Endothelial cell of umbilical vein (primary cell): ENCODE measurements at regions of chr22 and their contacts with region 1.

Region 1: GRCh38 chr22:17562906-17563870 is at the start of gene SLC25A18:
- DNase-seq: no peak
- H3K4me3 ChIP-seq: no peak within 1 kb of the TSS
- H3K27ac ChIP-seq: no peak within 1 kb of the TSS
- H3K4me1 ChIP-seq: no peaks in the 10 kb centered on the region
- H3K27me3 ChIP-seq: peaks cover 3 to 6% of the 10 kb centered on the region in 2 experiments
- CTCF ChIP-seq: no peak
- POLR2A ChIP-seq: no peak
- total RNA-seq, gene SLC25A18: not detected in 2 replicates

Region 2: DNA sequence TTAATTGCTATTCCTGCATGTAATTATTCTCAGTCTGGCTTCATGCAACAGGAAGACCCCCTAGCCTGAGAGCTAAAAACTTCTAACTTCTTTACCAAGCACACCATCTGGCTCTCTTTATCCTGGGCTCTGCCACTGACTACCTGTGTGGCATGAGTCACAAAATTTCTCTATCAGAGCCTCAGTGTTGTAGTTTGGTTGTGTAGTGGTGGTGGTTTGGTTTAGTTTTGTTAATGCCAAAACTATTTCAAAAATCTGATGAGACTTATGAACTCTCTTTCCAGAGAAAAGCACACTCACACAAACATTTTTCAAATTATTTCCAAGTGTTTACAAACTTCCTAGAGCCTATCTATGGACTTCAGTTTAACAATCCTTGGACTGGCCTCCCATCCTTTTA is 485.9 kb before region 1 on chr22:
- CTCF ChIA-PET with region 1: interaction called, 12 read pairs
- POLR2A ChIA-PET with region 1: no interaction called
- dilution Hi-C with region 1: no loop called
- intact Hi-C with region 1: no loop called
- DNase-seq: no peak
- H3K4me3 ChIP-seq: no peak overlapping the region
- H3K27ac ChIP-seq: no peak overlapping the region
- H3K4me1 ChIP-seq: peaks cover 3% of the 10 kb centered on the region
- H3K27me3 ChIP-seq: no peaks in the 10 kb centered on the region
- CTCF ChIP-seq: no peak
- POLR2A ChIP-seq: no peak

Region 3: DNA sequence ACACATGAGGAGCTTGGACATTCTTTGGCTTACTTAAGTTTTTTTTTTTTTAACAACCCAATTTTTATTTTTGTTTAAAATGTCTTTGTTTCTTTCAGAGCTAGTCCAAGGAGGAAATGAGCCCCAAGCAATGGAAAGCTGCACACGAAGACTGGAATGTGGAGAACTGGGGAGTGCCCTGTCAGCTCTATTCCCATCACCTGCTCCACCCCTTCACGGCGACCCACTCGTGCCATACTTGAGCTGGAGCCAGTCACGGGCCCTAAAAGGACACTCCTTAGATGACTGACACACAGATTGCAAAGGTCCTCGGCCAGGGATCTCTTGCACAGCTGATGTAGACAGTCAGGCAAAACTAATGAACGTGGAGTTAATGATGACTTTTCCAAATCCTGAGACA is 10.5 kb before region 1 on chr22:
- CTCF ChIA-PET with region 1: interaction called, 13 read pairs
- POLR2A ChIA-PET with region 1: no interaction called
- dilution Hi-C with region 1: no loop called
- intact Hi-C with region 1: no loop called
- DNase-seq: no peak
- H3K4me3 ChIP-seq: no peak overlapping the region
- H3K27ac ChIP-seq: no peak overlapping the region
- H3K4me1 ChIP-seq: no peaks in the 10 kb centered on the region
- H3K27me3 ChIP-seq: peaks cover 3 to 4% of the 10 kb centered on the region in 2 experiments
- CTCF ChIP-seq: no peak
- POLR2A ChIP-seq: no peak

Region 4: GRCh38 chr22:17578136-17578754 is 15.1 kb after region 1 on chr22:
- CTCF ChIA-PET with region 1: interaction called, 10 read pairs
- POLR2A ChIA-PET with region 1: no interaction called
- dilution Hi-C with region 1: no loop called
- intact Hi-C with region 1: no loop called
- DNase-seq: peak; percentile 23
- H3K4me3 ChIP-seq: no peak overlapping the region
- H3K27ac ChIP-seq: no peak overlapping the region
- H3K4me1 ChIP-seq: no peaks in the 10 kb centered on the region
- H3K27me3 ChIP-seq: no peaks in the 10 kb centered on the region
- CTCF ChIP-seq: no peak
- POLR2A ChIP-seq: no peak

Region 5: DNA sequence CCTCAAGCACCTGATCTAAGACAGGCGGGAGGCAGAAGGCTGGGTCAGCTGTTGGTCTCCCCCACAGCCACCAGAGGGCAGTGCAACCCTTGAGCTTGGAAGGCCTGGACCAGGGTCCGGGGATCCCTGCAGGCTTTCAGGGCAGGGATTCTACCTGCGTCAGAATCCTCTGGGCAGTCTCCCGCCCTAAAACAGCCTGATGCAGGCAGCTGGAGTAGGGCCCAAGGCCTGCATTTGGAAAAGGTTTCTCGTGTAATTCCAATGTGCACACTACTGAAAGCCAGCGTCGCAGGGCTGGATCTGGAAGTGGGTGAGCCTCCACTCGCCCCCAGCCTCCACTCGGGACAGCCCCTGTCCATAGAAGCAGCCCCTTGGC is 179.3 kb after region 1 on chr22:
- CTCF ChIA-PET with region 1: interaction called, 22 read pairs
- POLR2A ChIA-PET with region 1: no interaction called
- dilution Hi-C with region 1: no loop called
- intact Hi-C with region 1: no loop called
- DNase-seq: peak; percentile 49
- H3K4me3 ChIP-seq: no peak overlapping the region
- H3K27ac ChIP-seq: no peak overlapping the region
- H3K4me1 ChIP-seq: no peaks in the 10 kb centered on the region
- H3K27me3 ChIP-seq: no peaks in the 10 kb centered on the region
- CTCF ChIP-seq: peak; percentile 66 to 88
- POLR2A ChIP-seq: no peak

Region 6: DNA sequence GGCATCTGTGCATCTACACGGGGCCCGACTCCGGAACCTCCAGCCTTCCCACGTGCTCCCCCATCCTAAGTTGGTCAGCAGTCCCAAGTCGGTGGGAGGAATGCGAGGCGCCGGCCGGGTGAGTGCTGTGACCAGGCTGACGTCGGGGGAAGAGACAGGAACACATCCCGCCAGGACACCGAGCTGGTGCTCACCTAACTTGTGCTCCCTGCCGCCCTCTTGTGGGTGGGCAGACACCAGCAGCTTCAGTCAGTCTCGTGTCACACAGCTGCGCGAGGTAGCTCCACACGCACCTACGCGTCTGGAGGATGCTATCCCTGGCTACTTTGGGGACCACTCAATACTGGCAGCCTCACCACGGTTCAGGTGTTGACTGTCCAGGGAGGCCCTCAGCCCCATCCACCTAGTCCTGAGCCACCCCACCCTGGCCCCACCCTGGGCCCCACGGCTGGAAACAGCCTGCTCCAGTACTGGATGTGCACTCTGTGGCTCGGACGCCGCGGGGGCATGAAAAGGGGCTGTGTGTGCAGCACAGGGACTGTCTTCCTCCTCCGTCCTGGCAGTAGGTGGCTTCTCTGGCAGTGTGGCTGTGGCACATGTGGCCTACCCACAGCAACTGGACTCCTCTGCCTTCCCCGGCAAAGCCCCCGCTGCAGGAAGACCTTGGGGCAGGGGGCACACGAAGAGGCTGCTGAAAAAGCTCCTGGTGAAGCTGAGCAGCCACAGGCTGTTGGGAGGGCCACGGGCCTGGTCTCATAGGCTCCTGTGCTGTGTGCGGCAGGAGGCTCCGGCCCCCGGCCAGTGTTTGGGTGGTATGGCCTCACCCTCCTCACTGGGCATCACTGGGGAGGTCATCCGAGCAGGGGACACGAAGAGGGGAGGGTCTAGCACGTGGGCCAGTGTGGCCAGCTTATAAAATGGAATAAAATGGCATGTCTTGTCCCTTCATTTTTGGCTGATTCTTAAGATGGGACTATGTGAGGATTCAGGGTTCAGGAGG is 222.3 kb after region 1 on chr22:
- CTCF ChIA-PET with region 1: interaction called, 38 read pairs
- POLR2A ChIA-PET with region 1: no interaction called
- dilution Hi-C with region 1: no loop called
- intact Hi-C with region 1: no loop called
- DNase-seq: peak; percentile 11
- H3K4me3 ChIP-seq: no peak overlapping the region
- H3K27ac ChIP-seq: no peak overlapping the region
- H3K4me1 ChIP-seq: peaks cover 9% of the 10 kb centered on the region
- H3K27me3 ChIP-seq: no peaks in the 10 kb centered on the region
- CTCF ChIP-seq: peak; percentile 42 to 64
- POLR2A ChIP-seq: no peak

Region 7: GRCh38 chr22:17830043-17830961 is 267.1 kb after region 1 on chr22:
- CTCF ChIA-PET with region 1: interaction called, 14 read pairs
- POLR2A ChIA-PET with region 1: no interaction called
- dilution Hi-C with region 1: no loop called
- intact Hi-C with region 1: no loop called
- DNase-seq: peak; percentile 82
- H3K4me3 ChIP-seq: no peak overlapping the region
- H3K27ac ChIP-seq: no peak overlapping the region
- H3K4me1 ChIP-seq: no peaks in the 10 kb centered on the region
- H3K27me3 ChIP-seq: no peaks in the 10 kb centered on the region
- CTCF ChIP-seq: peak; percentile 97
- POLR2A ChIP-seq: no peak